ENCODE measurements at regions of chr11 and their contacts with region 1.

Region 1: DNA sequence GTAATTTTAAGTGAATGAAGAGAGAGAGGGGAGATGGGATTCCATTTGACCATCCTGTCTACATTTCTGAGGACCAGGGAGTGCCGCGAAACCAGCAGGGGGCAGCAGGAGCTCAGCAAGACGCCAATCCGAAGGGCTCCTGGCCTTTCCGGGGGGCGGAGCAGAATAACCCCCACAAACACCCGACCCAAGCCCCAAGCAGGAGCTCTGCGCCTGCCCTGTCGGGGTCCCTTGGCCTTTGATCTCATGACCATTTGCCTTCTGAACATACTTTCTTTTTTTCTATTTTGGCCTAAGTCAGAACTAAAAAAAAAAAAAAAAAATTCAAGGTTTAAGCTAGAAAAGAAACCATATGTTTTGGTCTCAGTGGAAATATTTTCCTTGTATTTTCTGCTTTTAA is 21.9 kb upstream of the SCN2B start:
- DNase-seq: peak; percentile 80
- CTCF ChIP-seq: peak; percentile 89

Region 2: DNA sequence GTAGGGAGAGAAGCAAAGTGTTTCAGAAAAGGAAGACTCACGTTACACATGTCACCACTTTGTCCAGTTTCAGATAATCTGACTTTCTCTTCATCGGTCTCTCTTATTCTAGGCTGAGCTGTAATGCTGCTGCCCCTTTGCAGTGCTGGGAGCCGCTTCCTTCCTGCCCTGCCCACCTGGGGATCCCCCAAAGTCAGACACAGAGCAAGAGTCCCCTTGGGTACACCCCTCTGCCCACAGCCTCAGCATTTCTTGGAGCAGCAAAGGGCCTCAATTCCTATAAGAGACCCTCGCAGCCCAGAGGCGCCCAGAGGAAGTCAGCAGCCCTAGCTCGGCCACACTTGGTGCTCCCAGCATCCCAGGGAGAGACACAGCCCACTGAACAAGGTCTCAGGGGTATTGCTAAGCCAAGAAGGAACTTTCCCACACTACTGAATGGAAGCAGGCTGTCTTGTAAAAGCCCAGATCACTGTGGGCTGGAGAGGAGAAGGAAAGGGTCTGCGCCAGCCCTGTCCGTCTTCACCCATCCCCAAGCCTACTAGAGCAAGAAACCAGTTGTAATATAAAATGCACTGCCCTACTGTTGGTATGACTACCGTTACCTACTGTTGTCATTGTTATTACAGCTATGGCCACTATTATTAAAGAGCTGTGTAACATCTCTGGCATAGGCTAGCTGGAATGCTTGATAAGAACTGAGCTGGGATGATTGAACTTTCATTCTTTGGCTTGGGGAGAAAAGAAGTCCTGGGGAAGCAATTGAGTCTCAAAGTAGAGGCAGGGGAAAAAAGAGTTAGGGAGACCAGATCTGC is 80.4 kb before region 1 on chr11:
- CTCF ChIA-PET with region 1: no interaction called
- POLR2A ChIA-PET with region 1: no interaction called
- DNase-seq: no peak
- CTCF ChIP-seq: no peak

Region 3: DNA sequence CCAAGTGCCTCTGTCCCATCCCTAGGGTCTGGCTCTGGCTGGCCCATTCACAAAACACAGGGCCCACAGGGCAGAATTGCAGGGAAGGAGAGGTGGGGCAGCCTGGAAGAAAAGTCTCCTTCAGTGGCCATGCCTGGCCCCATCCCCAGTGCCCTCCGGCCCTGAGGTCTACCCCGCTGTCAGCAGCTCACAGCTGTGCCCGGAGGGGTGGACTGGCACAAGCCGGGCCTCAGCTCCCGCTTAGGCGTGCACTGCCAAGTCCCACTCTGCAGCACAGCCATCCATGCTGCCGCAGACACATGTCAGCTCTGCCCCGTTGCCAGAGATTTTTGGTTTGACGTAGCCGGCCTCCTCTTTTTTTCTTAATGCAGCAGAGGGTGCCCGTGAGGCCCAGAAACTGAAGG is 18.1 kb before region 1 on chr11:
- CTCF ChIA-PET with region 1: interaction called, 15 read pairs
- POLR2A ChIA-PET with region 1: no interaction called
- DNase-seq: no peak
- CTCF ChIP-seq: no peak

Region 4: DNA sequence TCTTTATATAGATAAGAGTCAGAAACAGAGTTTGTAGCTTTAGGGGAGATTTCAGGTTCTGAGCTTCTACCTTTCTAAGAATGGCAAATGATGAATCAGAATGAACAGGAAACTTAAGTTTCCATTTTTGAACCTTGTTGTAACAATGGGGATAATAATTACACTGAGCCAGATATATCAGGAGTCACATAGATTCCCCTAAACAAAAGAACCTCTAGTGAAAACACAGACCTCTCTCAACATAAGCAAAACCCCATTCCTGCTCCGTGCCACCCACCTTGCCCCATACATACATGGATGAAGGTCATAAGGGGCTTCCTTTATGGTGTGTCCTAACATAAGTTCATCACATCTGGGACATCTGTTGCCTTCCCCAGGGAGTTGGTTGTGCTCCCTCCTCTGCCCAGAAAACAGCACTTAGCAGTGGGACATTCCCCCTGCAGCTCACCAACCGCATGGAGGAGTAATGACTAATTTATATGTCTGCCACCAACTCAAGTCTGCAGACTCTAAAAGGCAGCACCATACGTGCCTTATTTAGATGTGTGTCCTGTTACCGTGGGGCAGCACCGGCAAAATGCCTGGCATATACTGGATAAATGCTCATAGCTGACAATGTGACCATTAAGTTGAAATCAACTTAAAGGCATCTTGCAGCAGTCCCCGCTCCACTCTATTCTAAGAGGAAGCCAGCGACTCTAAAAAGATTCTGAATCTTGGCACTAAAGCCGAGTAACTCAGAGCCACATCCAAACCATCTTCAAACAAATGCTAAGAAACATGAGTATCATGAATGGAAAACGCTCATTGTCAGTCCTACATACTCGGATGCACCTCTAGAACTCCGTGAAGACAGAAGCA is 18.5 kb after region 1 on chr11:
- CTCF ChIA-PET with region 1: interaction called, 90 read pairs
- POLR2A ChIA-PET with region 1: interaction called, 7 read pairs
- DNase-seq: peak; percentile 50
- CTCF ChIP-seq: peak; percentile 13

Region 5: DNA sequence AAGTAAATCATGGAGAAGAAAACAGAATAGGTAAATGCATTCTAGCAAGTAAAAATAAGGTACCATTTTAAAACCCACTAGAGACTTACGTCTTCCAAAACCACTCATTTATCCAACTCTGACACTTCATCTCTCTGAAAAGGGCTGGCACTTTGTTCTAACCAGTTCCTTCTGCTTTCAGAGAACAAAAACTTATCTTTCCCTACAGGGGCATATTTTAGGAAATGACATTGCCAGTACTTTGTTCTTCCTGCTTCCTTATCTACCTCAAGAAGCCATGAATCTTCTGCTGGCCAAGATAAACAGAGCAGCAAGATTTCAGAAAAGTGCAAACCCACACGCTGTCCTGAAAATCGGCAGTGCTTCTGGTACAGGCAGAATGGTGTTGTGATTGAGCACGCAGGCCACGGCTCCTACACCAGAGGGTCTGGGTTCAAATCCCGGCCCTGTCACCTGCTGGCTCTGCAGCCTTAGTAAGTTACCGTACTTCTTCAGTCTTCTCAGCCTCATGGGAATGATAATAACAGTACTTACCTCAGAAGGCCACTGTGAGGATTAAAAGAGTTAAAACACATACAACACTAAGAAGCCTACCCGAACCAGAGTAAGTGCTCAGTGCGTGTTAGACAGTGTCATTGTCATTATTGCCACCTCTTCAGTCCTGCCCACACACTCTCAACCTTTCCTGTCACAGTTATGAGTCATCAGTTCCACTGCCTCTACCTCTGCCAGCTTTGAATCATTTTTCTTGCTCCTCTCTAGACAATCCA is 42.8 kb after region 1 on chr11:
- CTCF ChIA-PET with region 1: interaction called, 17 read pairs
- POLR2A ChIA-PET with region 1: no interaction called
- DNase-seq: peak; percentile 60
- CTCF ChIP-seq: no peak

Region 6: DNA sequence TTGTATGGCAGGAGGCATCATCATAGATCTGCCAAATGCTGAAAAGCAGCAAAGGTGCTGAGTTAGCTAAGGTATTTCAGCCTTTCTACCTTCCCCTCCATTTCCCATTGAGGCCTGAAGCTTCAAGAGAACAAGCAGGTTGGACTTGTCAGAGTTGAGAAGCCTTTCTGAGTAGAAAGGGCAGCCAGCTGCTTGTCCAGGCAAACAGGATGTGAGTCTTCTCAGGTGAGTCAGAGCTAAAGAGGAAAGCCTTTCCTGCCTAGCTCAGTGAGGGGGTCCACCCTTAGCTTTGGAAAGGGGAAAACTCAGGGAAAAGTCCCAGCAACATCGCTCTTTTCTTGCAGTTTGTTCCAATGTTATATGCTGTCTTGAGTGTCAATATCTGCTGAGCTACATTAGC is 78.9 kb after region 1 on chr11:
- CTCF ChIA-PET with region 1: interaction called, 21 read pairs
- POLR2A ChIA-PET with region 1: no interaction called
- DNase-seq: peak; percentile 34
- CTCF ChIP-seq: no peak

Region 7: DNA sequence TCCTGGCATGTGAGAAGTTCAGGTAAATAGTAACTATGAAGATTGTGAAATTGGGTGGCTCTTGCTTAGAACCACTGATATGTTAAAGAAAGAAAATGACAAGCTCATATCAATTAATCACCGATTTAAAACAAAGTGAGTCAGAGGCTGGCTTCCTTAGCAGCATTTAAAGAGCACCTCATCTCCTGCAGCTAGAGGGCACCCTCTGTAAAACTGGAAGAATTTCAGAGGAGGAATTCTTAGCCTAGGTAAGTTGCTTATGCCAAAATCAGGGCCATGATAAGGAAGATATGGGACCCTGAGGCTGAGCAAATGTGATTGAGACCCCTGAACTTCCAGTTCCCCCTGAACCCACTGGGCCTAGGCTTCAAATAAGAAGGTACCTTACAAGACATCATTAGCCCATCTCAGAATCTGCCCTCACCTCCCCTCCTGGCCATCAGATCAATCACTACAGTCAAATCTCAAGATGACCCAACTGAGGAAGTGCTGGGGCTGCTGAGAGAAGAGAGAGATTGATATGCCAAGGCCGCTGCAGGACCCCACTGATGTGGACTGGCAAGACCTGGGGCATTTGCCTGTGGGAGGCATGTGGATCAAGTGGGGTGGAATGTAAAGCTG is 97.6 kb after region 1 on chr11:
- CTCF ChIA-PET with region 1: interaction called, 13 read pairs
- POLR2A ChIA-PET with region 1: no interaction called
- DNase-seq: no peak
- CTCF ChIP-seq: peak; percentile 77

Region 8: DNA sequence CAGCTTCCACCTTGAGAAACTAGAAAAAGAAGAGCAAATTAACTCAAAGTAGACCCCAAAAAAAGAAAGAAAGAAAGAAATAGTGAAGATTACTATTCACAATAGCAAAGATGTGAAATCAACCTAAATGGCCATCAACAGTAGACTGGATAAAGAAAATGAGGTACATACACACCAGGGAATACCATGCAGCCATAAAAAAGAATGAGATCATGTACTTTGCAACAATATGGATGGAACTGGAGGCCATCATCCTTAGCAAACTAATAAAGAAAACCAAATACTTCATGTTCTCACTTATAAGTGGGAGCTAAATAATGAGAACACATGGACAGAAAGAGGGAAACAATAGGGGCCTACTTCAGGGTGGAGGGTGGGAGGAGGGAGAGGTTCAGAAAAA is 130.4 kb after region 1 on chr11:
- CTCF ChIA-PET with region 1: no interaction called
- POLR2A ChIA-PET with region 1: no interaction called
- DNase-seq: no peak
- CTCF ChIP-seq: no peak

Region 9: DNA sequence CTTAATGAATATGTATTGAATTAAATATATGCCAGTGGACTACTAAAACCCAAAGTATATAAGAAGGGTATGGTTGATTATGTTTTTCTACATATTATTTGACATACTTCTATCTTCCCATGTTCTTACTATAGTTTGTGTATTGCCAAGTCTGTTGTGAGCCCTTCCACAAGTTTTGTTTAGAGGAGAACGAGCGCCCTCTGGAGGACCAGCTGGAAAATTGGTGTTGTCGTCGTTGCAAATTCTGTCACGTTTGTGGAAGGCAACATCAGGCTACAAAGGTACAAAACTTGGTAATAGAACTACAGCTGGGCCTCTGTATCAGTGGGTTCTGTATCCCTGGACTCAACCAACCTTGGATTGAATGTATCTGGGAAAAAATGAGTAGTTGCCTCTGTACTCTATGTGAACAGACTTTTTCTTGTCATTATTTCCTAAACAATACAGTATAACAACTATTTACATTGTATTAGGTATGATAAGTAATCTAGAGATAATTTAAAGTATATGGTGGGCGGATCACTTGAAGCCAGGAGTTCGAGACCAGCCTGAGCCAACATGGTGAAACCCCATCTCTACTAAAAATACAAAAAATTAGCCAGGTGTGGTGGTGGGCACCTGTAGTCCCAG is 290.2 kb after region 1 on chr11:
- CTCF ChIA-PET with region 1: interaction called, 10 read pairs
- POLR2A ChIA-PET with region 1: no interaction called
- DNase-seq: peak; percentile 81
- CTCF ChIP-seq: peak; percentile 78

Measured in GM10248 (cell line).